ENCODE measurements at regions of chr14 and their contacts with region 1.

Region 1: GRCh38 chr14:54773171-54773975 is 129.3 kb downstream of the GCH1 start:
- DNase-seq: peak; percentile 92
- ATAC-seq: peak; percentile 81
- H3K4me3 Mint-ChIP-seq: peak overlapping the region; percentile 6
- H3K27ac Mint-ChIP-seq: peak overlapping the region; percentile 83
- H3K4me1 Mint-ChIP-seq: peaks cover 54% of the 10 kb centered on the region
- H3K27me3 Mint-ChIP-seq: peaks cover 14% of the 10 kb centered on the region

Region 2: DNA sequence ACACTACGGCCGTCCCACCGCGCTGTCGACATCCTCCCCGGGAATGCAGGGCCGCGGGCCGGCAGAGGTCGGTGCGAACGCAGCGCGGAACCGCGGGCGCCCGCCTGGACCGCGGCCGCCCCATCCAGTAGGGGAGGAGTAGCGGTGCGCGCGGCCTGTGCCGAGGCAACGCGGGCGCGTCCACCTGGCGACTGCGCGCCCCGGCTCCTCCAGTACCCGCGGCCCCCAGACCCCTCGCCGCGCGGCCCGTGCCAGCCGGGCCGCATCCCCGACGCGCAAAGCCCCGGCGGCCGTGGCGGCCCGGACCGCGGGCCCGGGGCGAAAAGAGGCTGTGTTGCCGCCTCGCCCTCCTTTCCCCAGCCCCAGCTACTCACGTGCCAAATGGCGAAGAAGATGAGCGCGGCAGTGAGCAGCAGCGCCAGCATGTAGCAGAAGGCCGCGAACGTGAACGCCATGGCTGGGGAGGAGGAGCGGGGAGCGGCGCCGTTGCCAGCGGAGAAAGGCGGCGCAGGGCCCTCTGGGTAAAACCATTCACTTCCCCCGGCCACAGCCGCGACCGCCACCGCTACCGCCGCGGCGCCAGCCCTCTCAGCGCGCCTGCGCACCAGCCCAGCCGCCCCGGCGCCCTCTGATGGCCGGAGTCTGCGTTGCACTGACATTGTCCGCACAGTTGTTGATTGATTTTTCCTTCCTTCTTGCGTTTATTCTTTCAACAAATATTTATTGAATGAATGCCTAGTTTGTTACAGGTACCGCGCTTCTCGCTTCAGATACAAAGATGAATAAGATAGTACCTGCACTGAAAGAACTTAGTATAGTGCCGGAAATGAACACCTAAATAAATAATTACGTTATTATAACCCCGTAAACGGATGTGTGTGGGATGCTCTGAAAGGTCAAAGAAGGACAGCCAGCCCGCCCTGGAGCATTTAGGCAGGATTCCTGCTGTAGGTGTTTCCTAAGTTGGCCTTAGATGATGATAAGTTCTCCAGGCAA is 332.2 kb before region 1 on chr14 and contains the start of gene CNIH1:
- CTCF ChIA-PET with region 1: interaction called, 3 read pairs
- POLR2A ChIA-PET with region 1: no interaction called
- intact Hi-C with region 1: loop called (anchors 1 to 2 kb)
- DNase-seq: peak; percentile 96
- ATAC-seq: peak; percentile 92
- H3K4me3 Mint-ChIP-seq: peak within 1 kb of the TSS; percentile 80
- H3K27ac Mint-ChIP-seq: peak within 1 kb of the TSS; percentile 99
- H3K4me1 Mint-ChIP-seq: peaks cover 47% of the 10 kb centered on the region
- H3K27me3 Mint-ChIP-seq: no peaks in the 10 kb centered on the region
- total RNA-seq, gene CNIH1: 86.6 to 109 TPM

Region 3: GRCh38 chr14:54572316-54572715 is 201.1 kb before region 1 on chr14:
- CTCF ChIA-PET with region 1: interaction called, 189 read pairs
- POLR2A ChIA-PET with region 1: interaction called, 4 read pairs
- intact Hi-C with region 1: no loop called
- DNase-seq: peak; percentile 54
- ATAC-seq: no peak
- H3K4me3 Mint-ChIP-seq: no peak overlapping the region
- H3K27ac Mint-ChIP-seq: no peak overlapping the region
- H3K4me1 Mint-ChIP-seq: peaks cover 15% of the 10 kb centered on the region
- H3K27me3 Mint-ChIP-seq: peaks cover 28% of the 10 kb centered on the region

Region 4: DNA sequence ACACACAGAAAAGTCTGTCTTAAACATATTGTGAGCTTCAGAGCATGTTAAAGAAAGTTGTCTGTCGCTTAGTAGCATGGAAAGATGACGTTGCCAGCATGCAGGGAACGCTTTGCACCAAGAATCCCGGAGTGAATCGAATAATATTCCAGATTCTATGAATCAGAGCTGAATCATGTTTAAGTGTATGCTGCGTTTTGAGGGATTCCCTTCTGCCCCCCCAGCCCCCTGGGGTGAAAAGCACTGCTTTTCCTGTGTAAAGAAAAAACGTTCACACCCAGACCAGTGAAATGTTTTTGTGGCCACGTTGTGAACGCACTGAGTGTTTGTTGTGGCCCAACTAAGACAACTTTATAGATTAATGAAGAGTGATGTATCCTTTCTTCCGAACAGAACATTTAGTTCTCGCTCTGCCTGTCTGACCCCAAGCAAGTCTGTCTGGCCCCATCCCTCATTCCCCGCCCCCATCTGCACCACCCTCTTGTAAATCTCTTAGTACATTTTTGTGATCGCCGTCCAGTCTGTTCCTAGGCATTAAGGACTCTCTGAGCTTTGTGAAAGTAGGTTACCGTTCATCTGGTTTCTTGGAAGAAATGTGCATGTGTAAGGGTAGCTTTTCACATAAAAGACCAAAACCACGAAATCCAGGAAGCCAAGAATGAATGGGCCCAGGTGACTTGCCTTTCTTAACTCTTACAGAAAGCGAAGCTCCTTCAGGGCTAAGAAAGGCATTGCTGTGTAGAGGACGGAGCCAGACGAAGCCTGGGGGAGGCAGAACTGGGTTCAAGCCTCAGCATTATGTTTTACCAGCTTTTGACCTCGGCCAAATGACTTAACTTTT is 103.4 kb before region 1 on chr14:
- CTCF ChIA-PET with region 1: interaction called, 10 read pairs
- POLR2A ChIA-PET with region 1: no interaction called
- intact Hi-C with region 1: loop called in 1 of 2 experiments (anchors 5 kb)
- DNase-seq: peak; percentile 38
- ATAC-seq: peak; percentile 83
- H3K4me3 Mint-ChIP-seq: no peak overlapping the region
- H3K27ac Mint-ChIP-seq: peak overlapping the region; percentile 39
- H3K4me1 Mint-ChIP-seq: peaks cover 29% of the 10 kb centered on the region
- H3K27me3 Mint-ChIP-seq: peaks cover 22% of the 10 kb centered on the region

Region 5: GRCh38 chr14:54737132-54737711 is 36.2 kb before region 1 on chr14:
- CTCF ChIA-PET with region 1: interaction called, 49 read pairs
- POLR2A ChIA-PET with region 1: no interaction called
- intact Hi-C with region 1: loop called in 1 of 2 experiments (anchors 1 kb)
- DNase-seq: peak; percentile 21
- ATAC-seq: peak; percentile 86
- H3K4me3 Mint-ChIP-seq: no peak overlapping the region
- H3K27ac Mint-ChIP-seq: peak overlapping the region; percentile 42
- H3K4me1 Mint-ChIP-seq: peaks cover 46% of the 10 kb centered on the region
- H3K27me3 Mint-ChIP-seq: no peaks in the 10 kb centered on the region

Region 6: GRCh38 chr14:54902521-54903420 is 129.4 kb after region 1 on chr14 and contains the start of gene GCH1:
- CTCF ChIA-PET with region 1: interaction called, 6 read pairs
- POLR2A ChIA-PET with region 1: interaction called, 4 read pairs
- intact Hi-C with region 1: loop called in 1 of 2 experiments (anchors 1 kb)
- DNase-seq: peak; percentile 81
- ATAC-seq: peak; percentile 80
- H3K4me3 Mint-ChIP-seq: peak within 1 kb of the TSS; percentile 88
- H3K27ac Mint-ChIP-seq: peak within 1 kb of the TSS; percentile 90
- H3K4me1 Mint-ChIP-seq: peaks cover 26% of the 10 kb centered on the region
- H3K27me3 Mint-ChIP-seq: no peaks in the 10 kb centered on the region
- total RNA-seq, gene GCH1: 28.1 to 36.4 TPM

Region 7: GRCh38 chr14:55019968-55020554 is 246.7 kb after region 1 on chr14:
- CTCF ChIA-PET with region 1: no interaction called
- POLR2A ChIA-PET with region 1: no interaction called
- intact Hi-C with region 1: no loop called
- DNase-seq: no peak
- ATAC-seq: no peak
- H3K4me3 Mint-ChIP-seq: no peak overlapping the region
- H3K27ac Mint-ChIP-seq: no peak overlapping the region
- H3K4me1 Mint-ChIP-seq: peaks cover 16% of the 10 kb centered on the region
- H3K27me3 Mint-ChIP-seq: no peaks in the 10 kb centered on the region

Measured in activated CD4-positive, alpha-beta T cell treated with anti-CD3 and anti-CD28 coated beads for 36 hours (primary cell).